Motor neuron (in vitro differentiated cells): ENCODE measurements at regions of chr6 and their contacts with region 1.

Region 1: GRCh38 chr6:16761471-16762267 is 409 bp upstream of the ATXN1 start:
- ATAC-seq: peak; percentile 32 to 75 (median 69)
- H3K4me3 ChIP-seq: peak overlapping the region; percentile 82 to 99 (median 89)
- H3K27ac ChIP-seq: peak overlapping the region; percentile 84
- H3K4me1 ChIP-seq: peaks cover 15 to 17% of the 10 kb centered on the region in 2 donors

Region 2: GRCh38 chr6:16319813-16320532 is 441.7 kb before region 1 on chr6:
- in situ Hi-C with region 1: loop called in 8 of 9 experiments (anchors 10 to 25 kb)
- ATAC-seq: peak; percentile 67 to 91 (median 74)
- H3K4me3 ChIP-seq: no peak overlapping the region
- H3K27ac ChIP-seq: peak overlapping the region; percentile 53 to 80
- H3K4me1 ChIP-seq: peaks cover 34 to 51% of the 10 kb centered on the region in 2 donors

Region 3: DNA sequence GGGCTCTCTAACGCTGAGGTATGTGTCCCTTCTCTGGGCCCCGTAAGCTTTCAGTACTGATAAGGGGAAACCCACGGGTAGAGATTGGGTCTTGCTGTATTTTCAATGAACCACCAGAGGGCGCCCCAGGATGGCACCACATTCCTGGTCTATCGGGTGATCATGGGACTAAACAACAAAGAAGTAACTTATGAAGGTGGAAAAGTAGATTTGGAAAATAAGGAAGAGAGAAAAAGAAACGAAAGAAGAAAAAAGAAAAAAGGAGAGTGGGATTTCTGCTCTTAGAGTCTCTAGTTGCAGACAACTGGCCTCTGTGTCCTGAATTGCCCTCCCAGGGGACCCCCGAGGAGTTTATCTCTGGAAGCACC is 429.5 kb before region 1 on chr6:
- in situ Hi-C with region 1: loop called in 8 of 9 experiments (anchors 10 to 25 kb)
- ATAC-seq: peak; percentile 40 to 85 (median 78)
- H3K4me3 ChIP-seq: peak overlapping the region in 1 of 5 donors; percentile 10
- H3K27ac ChIP-seq: peak overlapping the region in 1 of 2 donors; percentile 24
- H3K4me1 ChIP-seq: peaks cover 5 to 7% of the 10 kb centered on the region in 2 donors

Region 4: DNA sequence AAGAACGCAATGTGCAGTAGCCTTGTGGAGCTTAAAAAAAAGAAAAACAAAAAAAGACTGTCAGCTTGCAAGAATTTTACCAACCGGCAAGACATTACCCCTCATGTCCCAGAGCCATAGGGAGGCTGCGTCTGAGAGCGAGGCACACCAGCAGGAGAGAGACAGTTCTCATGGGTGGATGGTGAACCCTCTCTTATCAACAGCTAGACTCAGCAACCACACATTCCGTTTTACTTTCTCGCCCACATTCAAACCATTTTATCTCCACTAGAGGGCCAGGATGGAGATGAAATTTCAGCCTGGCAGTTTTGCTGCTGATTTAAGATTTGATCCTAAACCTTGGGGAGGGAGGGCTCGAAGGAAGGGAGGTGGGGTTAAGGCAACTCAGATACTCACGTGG is 247.4 kb before region 1 on chr6:
- in situ Hi-C with region 1: loop called in 2 of 9 experiments (anchors 25 kb)
- ATAC-seq: peak in 4 of 8 experiments; percentile 16 to 62 (median 28)
- H3K4me3 ChIP-seq: no peak overlapping the region
- H3K27ac ChIP-seq: no peak overlapping the region
- H3K4me1 ChIP-seq: peaks cover 3 to 4% of the 10 kb centered on the region in 2 donors

Region 5: DNA sequence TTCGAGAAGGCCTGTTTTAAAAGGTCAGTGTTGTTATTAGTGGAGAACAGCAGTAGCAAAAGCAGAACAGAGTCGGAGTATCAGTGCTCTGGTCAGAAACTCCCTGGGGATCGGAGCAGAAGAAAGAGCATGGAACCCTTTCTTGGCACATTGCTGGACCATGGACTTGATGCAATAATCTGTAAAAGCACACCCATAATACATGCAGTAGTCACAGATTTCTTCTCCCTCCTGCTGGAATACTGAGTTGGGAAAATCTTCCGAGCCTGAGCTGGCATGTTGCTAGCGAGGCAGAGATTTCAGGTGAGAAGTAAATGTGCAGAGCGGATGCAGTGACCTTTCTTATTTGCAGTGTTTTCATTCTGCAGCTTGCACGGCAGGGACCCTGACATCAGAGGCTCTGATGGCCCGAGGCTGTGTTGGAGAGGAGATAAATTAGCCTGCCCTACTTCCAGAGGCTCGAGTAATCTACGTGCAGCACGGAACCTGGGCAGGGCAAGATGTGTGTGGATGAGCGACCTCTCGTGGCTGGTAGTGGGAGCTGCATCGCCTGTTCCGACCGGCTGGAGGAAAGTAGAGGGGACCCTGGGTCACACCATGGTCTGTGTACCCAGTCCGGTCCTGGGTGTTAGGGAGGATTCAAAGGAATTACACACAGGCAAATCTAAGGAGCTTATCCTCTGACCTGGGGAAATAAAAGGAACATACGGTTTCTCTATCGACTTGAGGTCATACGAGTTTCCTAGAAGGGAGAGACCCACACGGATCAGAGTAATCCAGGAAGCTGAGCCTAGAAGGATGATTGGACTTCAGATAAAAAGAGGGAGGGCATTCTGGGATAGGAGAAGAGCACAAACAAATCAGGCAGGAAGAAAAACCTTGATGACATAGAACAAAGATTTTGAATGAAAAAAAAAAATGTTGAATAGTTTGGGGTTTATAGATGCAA is 203.2 kb after region 1 on chr6:
- in situ Hi-C with region 1: loop called in 6 of 9 experiments (anchors 25 kb)
- ATAC-seq: peak; percentile 93 to 100 (median 100)
- H3K4me3 ChIP-seq: no peak overlapping the region
- H3K27ac ChIP-seq: peak overlapping the region; percentile 32 to 42
- H3K4me1 ChIP-seq: peaks cover 6 to 7% of the 10 kb centered on the region in 2 donors

Region 6: GRCh38 chr6:17086469-17086868 is 324.8 kb after region 1 on chr6:
- in situ Hi-C with region 1: loop called in 1 of 9 experiments (anchors 25 kb)
- ATAC-seq: peak in 6 of 8 experiments; percentile 34 to 94 (median 73)
- H3K4me3 ChIP-seq: no peak overlapping the region
- H3K27ac ChIP-seq: no peak overlapping the region
- H3K4me1 ChIP-seq: no peaks in the 10 kb centered on the region